ENCODE measurements at regions of chr1 and their contacts with region 1.

Region 1: GRCh38 chr1:75115654-75116053 is 18.5 kb upstream of the LHX8 start:
- DNase-seq: no peak
- ATAC-seq: no peak
- H3K4me3 ChIP-seq: no peak overlapping the region
- H3K27ac ChIP-seq: no peak overlapping the region
- H3K4me1 ChIP-seq: no peaks in the 10 kb centered on the region
- H3K27me3 ChIP-seq: peaks cover 13% of the 10 kb centered on the region; the same call in 1 of the 2 replicates
- CTCF ChIP-seq: no peak
- POLR2A ChIP-seq: no peak
- RAD21 ChIP-seq: no peak

Region 2: DNA sequence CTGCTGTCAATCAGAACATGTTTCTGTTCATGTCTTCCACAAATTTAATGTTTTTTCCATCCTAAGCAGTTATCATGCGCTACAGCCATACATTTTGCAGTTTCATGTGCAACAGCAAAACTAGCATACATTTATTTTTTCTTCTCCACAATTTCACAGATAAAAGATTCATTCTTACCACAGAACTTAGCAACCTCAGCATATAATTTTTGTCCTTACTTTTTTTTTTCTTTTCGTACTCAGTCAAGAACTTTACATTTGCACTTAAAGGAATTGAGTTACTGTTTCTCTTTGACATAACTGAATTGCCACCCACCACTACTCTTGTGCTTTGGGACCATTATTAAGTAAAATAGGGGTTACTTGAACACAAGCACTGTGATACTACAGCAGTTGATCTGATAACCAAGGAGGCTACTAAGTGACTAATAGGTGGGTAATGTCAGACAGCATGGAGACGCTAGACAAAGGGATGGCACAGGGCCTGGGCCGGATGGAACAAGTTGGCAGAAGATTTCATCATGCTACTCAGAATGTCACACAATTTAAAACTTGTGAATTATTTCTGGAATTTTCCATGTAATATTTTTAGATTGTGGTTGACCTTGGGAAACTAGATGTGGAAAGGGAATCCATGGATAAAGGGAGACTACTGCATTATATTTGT is 31.7 kb before region 1 on chr1:
- CTCF ChIA-PET with region 1: no interaction called
- POLR2A ChIA-PET with region 1: no interaction called
- RAD21 ChIA-PET with region 1: no interaction called
- intact Hi-C with region 1: loop called (anchors 2 kb)
- DNase-seq: no peak
- ATAC-seq: no peak
- H3K4me3 ChIP-seq: no peak overlapping the region
- H3K27ac ChIP-seq: no peak overlapping the region
- H3K4me1 ChIP-seq: no peaks in the 10 kb centered on the region
- H3K27me3 ChIP-seq: peaks cover 17% of the 10 kb centered on the region; the same call in 1 of the 2 replicates
- CTCF ChIP-seq: no peak
- POLR2A ChIP-seq: no peak
- RAD21 ChIP-seq: no peak

Measured in HCT116 (cell line).